ENCODE measurements at regions of chr21 and their contacts with region 1.

Region 1: DNA sequence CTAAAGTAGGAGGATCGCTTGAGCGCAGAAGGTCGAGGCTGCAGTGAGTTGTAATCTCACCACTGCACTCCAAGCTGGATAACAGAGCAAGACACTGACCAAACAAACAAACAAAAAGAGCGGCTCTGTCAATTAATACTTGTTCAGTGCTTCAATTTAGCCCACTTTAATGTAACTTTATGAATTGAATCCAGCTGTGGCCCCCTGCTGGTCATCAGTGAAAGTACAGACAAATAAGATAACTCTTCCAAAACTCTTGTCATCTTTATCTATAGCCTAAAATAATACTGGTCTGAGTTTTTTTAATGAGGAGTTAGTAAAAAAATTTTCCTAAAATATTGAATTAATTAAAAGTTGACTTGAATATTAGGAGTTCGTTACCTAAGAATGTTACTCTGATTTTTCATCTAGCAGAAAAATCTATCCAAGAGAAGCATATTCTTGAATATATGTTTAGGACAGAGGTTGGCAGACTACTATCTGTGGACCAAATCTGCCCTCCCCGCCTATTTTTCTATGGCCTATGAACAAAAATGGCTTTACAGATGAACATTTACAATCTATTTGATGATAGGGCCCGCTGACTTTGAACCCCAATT is 26.1 kb downstream of the ATP5PF start:
- DNase-seq: no peak
- H3K4me3 ChIP-seq: no peak overlapping the region
- H3K27ac ChIP-seq: no peak overlapping the region
- H3K4me1 ChIP-seq: peaks cover 11% of the 10 kb centered on the region
- H3K27me3 ChIP-seq: no peaks in the 10 kb centered on the region
- CTCF ChIP-seq: peak; percentile 85

Region 2: GRCh38 chr21:25501996-25502665 is 206.4 kb before region 1 on chr21:
- intact Hi-C with region 1: no loop called
- DNase-seq: no peak
- H3K4me3 ChIP-seq: no peak overlapping the region
- H3K27ac ChIP-seq: no peak overlapping the region
- H3K4me1 ChIP-seq: no peaks in the 10 kb centered on the region
- H3K27me3 ChIP-seq: no peaks in the 10 kb centered on the region
- CTCF ChIP-seq: no peak

Region 3: GRCh38 chr21:25607151-25608043 is 101.2 kb before region 1 on chr21 and contains the start of gene MRPL39:
- intact Hi-C with region 1: loop called (anchors 2 kb)
- DNase-seq: peak; percentile 86
- H3K4me3 ChIP-seq: peak within 1 kb of the TSS; percentile 85
- H3K27ac ChIP-seq: peak within 1 kb of the TSS; percentile 87
- H3K4me1 ChIP-seq: peaks cover 48% of the 10 kb centered on the region
- H3K27me3 ChIP-seq: no peaks in the 10 kb centered on the region
- CTCF ChIP-seq: peak; percentile 65
- total RNA-seq, gene MRPL39: 49.9 TPM

Region 4: GRCh38 chr21:25772686-25773085 is 64.1 kb after region 1 on chr21:
- intact Hi-C with region 1: no loop called
- DNase-seq: no peak
- H3K4me3 ChIP-seq: no peak overlapping the region
- H3K27ac ChIP-seq: no peak overlapping the region
- H3K4me1 ChIP-seq: no peaks in the 10 kb centered on the region
- H3K27me3 ChIP-seq: no peaks in the 10 kb centered on the region
- CTCF ChIP-seq: no peak

Region 5: GRCh38 chr21:26116456-26117011 is 408.0 kb after region 1 on chr21:
- intact Hi-C with region 1: no loop called
- DNase-seq: no peak
- H3K4me3 ChIP-seq: peak overlapping the region; percentile 21
- H3K27ac ChIP-seq: peak overlapping the region; percentile 84
- H3K4me1 ChIP-seq: peaks cover 69% of the 10 kb centered on the region
- H3K27me3 ChIP-seq: no peaks in the 10 kb centered on the region
- CTCF ChIP-seq: no peak

Measured in left ventricle myocardium inferior (tissue), 1 donor.